ENCODE measurements at regions of chr16 and their contacts with region 1.

Region 1: DNA sequence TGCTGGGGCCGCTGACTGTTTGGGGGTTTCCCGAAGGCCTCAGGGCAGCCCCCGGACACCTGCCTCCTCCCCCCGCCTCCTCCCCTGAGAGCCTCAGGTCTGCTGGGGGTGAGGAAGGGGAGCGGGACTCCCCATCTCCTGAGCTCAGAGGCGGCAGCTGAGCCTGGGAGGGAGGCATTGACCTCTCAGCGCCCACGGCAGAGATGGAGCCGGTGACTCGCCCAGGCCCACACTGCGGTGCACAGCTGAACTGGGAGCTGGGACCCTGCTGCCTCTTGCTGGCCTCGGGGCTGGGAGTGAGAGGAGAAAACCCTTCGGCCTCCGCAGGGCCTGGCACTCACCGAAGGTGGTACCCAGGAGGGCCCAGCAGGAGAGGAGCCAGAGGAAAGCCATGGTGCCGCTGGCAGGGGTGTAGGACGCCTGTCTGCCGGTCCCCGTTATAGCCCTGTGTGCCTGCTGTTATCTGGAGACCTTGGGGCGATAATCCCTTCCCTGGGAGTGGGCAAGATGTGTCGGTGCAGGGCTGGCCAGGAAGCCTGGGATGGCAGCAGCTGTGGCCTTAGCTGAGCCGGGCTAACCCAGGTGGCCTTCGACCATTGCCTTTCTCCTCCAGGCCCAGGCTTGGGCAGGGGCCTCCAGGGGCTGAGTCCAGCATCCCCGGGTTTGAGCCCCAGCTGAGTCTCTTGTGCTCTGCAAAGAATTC is at the start of gene CTRB2:
- DNase-seq: no peak
- H3K4me3 ChIP-seq: no peak within 1 kb of the TSS
- H3K27ac ChIP-seq: peak within 1 kb of the TSS in 3 of 8 donors; percentile 15 to 28 (median 26)
- H3K4me1 ChIP-seq: peaks cover 0 to 10% (median 0%) of the 10 kb centered on the region in 6 donors
- H3K27me3 ChIP-seq: peaks cover 0 to 20% (median 0%) of the 10 kb centered on the region in 7 donors
- CTCF ChIP-seq: peak in 3 of 11 experiments; percentile 11 to 39 (median 16)
- POLR2A ChIP-seq: no peak
- total RNA-seq, gene CTRB2: 1.3 to 11.8 (median 3.7) TPM in 6 of 7 donors, not detected in the other

Region 2: GRCh38 chr16:75130150-75130771 is 76.6 kb before region 1 on chr16:
- intact Hi-C with region 1: no loop called
- DNase-seq: no peak
- H3K4me3 ChIP-seq: no peak overlapping the region
- H3K27ac ChIP-seq: no peak overlapping the region
- H3K4me1 ChIP-seq: no peaks in the 10 kb centered on the region
- H3K27me3 ChIP-seq: peaks cover 0 to 19% (median 0%) of the 10 kb centered on the region in 7 donors
- CTCF ChIP-seq: no peak
- POLR2A ChIP-seq: no peak

Region 3: DNA sequence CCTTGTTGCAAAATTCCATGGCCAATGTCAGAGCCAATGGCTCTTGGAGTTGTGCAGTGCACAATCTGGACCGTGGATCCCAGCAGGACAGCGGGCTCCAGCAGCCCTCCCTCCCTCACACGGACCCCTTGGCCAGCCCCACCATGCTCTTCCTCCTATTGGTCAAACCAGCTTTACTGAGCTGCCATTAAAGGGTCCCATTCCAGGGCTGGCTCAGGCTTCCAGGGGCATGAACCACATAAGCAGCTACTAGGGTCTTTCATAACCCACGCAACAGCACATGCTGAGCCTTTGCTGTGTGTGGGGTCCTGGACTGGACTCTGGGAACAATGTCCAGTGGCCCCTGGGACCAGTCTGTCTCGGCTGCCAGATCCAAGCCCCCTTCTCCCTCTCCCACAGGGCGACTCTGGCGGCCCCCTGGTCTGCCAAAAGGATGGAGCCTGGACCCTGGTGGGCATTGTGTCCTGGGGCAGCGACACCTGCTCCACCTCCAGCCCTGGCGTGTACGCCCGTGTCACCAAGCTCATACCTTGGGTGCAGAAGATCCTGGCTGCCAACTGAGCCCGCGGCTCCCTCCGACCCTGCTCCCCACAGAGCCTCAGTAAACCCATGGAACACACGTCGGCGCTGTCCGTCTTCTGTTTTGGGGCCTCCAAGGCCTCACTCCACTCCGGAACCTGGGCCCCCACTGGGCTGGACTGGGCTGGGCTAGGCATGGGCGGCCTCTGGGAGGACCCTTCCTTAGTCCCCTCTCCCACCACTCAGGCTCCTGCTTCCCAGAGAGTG is 17.6 kb after region 1 on chr16:
- intact Hi-C with region 1: loop called (anchors 2 kb)
- DNase-seq: peak; percentile 72
- H3K4me3 ChIP-seq: no peak overlapping the region
- H3K27ac ChIP-seq: no peak overlapping the region
- H3K4me1 ChIP-seq: peaks cover 0 to 47% (median 9%) of the 10 kb centered on the region in 6 donors
- H3K27me3 ChIP-seq: peaks cover 0 to 52% (median 0%) of the 10 kb centered on the region in 7 donors
- CTCF ChIP-seq: peak in 1 of 11 experiments; percentile 14
- POLR2A ChIP-seq: no peak

Measured in spleen (tissue), 13 donors.